ENCODE measurements at regions of chr12 and their contacts with region 1.

Region 1: DNA sequence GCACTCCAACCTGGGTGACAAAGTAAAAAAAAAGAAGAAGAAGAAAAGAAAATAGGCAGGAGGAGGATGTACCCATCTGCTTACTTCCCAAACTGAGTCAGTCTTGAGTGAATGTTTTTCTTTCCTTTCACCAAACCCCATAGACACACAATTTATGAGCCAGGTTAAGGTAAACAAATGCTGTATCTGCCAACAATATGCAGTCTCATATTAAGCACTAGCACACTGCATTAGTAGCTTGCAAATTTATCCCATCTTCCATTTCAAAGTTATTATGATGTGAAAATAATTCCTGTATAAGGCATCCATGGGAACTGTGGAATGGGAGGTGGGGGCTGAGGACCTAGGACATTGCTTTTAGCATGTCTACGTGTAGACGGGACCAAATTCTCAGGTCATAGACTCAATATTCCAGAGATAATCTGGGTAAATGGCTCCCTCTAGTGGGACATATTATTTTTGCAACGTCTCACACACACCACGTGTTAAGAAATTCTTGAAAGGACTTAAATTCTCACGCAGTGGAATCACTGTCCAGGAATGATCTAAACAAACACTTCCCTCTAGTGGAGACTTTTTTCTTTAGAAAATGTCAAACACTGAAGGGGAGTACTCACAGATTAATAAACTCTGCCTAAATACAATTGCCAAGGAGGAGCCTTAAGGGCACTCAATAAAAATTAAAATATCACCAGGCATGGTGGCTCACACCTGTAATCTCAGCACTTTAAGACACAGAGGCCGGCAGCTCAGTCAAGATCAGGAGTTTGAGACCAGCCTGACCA is 17.1 kb upstream of the OR10P1 start:
- DNase-seq: no peak
- H3K4me3 ChIP-seq: no peak overlapping the region
- H3K27ac ChIP-seq: no peak overlapping the region
- H3K4me1 ChIP-seq: peaks cover 4% of the 10 kb centered on the region
- H3K27me3 ChIP-seq: no peaks in the 10 kb centered on the region
- CTCF ChIP-seq: peak; percentile 86

Region 2: DNA sequence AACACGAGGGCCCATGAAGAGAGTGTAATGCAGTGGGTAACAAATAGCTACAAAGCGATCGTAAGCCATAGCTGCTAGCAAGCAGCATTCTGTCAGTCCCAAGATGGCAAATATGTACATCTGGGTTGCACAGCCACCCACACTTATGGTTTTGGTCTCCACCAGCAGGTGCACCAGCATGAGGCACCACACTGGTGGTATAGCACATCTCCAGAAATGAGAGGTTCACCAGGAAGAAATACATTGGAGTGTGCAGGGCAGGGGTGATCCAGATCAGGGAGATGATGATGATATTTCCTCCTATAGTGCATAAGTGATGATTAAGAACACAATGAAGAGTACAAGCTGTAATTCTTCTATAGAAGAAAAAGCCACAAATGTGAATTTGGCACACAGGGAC is 425.2 kb before region 1 on chr12:
- intact Hi-C with region 1: loop called (anchors 5 kb)
- DNase-seq: no peak
- H3K4me3 ChIP-seq: no peak overlapping the region
- H3K27ac ChIP-seq: no peak overlapping the region
- H3K4me1 ChIP-seq: no peaks in the 10 kb centered on the region
- H3K27me3 ChIP-seq: peaks cover 7% of the 10 kb centered on the region
- CTCF ChIP-seq: no peak